Heart right ventricle (tissue), 16 donors: ENCODE measurements at regions of chr10 and their contacts with region 1.

Region 1: DNA sequence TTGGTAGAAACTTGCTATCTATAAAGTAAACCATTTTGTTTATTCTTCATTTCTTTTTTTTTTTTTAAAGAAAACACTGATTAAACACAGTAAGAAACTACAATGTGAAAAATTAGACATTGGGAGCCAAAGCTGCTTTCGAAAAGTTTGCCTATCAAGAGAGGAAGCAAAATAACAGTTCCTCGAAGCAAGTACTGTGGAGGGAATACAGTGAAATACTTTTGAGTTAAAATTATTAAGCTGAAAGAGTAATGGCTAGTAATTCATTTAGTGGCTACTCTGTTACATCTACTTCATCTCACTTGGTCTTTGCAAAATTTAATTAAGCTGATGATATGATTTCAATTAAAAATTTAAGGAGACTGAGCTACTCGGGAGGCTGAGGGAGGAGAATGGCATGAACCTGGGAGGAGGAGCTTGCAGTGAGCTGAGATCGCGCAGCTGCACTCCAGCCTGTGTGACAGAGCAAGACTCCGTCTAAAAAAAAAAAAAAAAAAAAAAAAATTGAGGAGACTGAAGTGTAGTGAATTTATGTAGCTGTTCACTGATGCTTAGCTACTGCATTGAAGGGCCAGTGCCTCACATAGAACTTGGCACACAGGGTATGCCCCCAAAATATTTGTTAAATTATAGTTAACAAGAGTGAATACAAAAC is 982.1 kb upstream of the MBL2 start:
- DNase-seq: no peak
- ATAC-seq: no peak
- H3K4me3 ChIP-seq: no peak overlapping the region
- H3K27ac ChIP-seq: no peak overlapping the region
- H3K4me1 ChIP-seq: no peaks in the 10 kb centered on the region
- H3K27me3 ChIP-seq: no peaks in the 10 kb centered on the region
- CTCF ChIP-seq: no peak

Region 2: GRCh38 chr10:53619671-53620070 is 135.1 kb before region 1 on chr10:
- intact Hi-C with region 1: no loop called
- DNase-seq: no peak
- ATAC-seq: no peak
- H3K4me3 ChIP-seq: no peak overlapping the region
- H3K27ac ChIP-seq: no peak overlapping the region
- H3K4me1 ChIP-seq: no peaks in the 10 kb centered on the region
- H3K27me3 ChIP-seq: no peaks in the 10 kb centered on the region
- CTCF ChIP-seq: no peak

Region 3: DNA sequence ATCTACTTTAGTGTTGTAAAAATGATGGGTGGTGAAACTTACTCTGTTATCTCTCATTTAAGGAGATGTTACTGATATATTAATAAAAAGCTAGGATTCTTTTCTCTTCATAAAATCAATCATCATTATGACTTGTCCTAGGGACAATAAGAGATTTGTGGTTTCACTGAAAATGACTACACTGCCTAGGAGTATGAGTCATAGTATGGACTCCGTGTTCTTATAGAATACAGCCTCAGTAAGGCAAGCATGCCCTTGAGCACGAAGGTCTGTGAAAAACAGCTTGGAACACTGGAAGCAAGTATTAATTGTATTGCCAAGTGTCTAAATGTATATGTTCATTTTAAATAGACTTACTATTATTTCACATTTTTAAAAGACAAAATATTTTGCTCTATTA is 1795.5 kb after region 1 on chr10:
- intact Hi-C with region 1: loop called in 1 of 10 experiments (anchors 10 kb)
- DNase-seq: no peak
- ATAC-seq: no peak
- H3K4me3 ChIP-seq: no peak overlapping the region
- H3K27ac ChIP-seq: no peak overlapping the region
- H3K4me1 ChIP-seq: no peaks in the 10 kb centered on the region
- H3K27me3 ChIP-seq: no peaks in the 10 kb centered on the region
- CTCF ChIP-seq: no peak